ENCODE measurements at regions of chr14 and their contacts with region 1.

Region 1: GRCh38 chr14:91060351-91061055 is at the start of gene RPS6KA5:
- DNase-seq: peak; percentile 100
- ATAC-seq: peak; percentile 95
- H3K4me3 ChIP-seq: peak within 1 kb of the TSS; percentile 68
- H3K27ac ChIP-seq: peak within 1 kb of the TSS; percentile 2; the same call in 1 of the 2 replicates
- H3K4me1 ChIP-seq: no peaks in the 10 kb centered on the region
- H3K27me3 ChIP-seq: no peaks in the 10 kb centered on the region
- CTCF ChIP-seq: no peak
- POLR2A ChIP-seq: peak; percentile 62; the same call in 1 of the 2 replicates
- RAD21 ChIP-seq: no peak
- total RNA-seq, gene RPS6KA5: 0.28 and 0.36 TPM in 2 replicates

Region 2: DNA sequence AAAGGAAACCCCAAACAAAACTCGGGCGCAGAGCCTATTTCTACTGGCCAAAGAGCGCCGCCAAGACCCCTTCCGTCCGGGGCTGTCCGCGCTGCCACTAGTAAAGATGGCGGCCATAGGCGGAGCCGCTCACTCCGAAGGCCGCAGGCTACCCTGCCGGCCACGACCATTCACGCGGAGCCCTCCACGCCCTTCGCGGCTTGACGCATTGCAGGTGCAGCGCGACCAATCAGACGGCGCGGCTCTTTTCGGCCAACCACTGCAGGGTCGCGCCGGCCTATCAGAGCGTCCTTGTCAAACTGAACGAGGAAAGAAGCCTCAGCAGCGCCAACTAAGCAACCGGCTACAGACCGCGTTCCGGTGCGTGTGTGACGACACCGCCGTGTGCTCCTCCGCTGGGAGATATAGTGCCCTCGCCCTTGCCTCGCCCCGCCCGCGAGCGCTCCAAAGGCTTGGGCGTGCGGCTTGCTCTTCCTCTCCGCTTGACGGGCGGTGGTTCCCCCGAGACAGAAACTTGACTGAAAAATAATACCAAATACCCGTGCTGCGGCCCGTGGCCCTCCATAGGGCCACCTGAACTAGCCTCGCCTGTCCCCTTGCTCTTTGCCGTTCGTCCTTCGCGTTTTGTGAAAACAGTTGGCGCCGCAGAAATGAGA is 677.3 kb before region 1 on chr14:
- CTCF ChIA-PET with region 1: no interaction called
- POLR2A ChIA-PET with region 1: no interaction called
- dilution Hi-C with region 1: no loop called
- in situ Hi-C with region 1: no loop called
- intact Hi-C with region 1: loop called (anchors 2 kb)
- DNase-seq: peak; percentile 100
- ATAC-seq: peak; percentile 95
- H3K4me3 ChIP-seq: peak overlapping the region; percentile 68
- H3K27ac ChIP-seq: peak overlapping the region; percentile 92
- H3K4me1 ChIP-seq: peaks cover 13% of the 10 kb centered on the region
- H3K27me3 ChIP-seq: no peaks in the 10 kb centered on the region
- CTCF ChIP-seq: 0 out of 2 replicates have a peak, but pooled peaks have one; percentile 4
- POLR2A ChIP-seq: peak; percentile 93
- RAD21 ChIP-seq: no peak; the same call in 1 of the 2 replicates

Region 3: GRCh38 chr14:90903101-90903500 is 157.4 kb before region 1 on chr14:
- CTCF ChIA-PET with region 1: no interaction called
- POLR2A ChIA-PET with region 1: no interaction called
- dilution Hi-C with region 1: no loop called
- in situ Hi-C with region 1: no loop called
- intact Hi-C with region 1: loop called (anchors 5 kb)
- DNase-seq: peak; percentile 53
- ATAC-seq: peak; percentile 94
- H3K4me3 ChIP-seq: no peak overlapping the region
- H3K27ac ChIP-seq: no peak overlapping the region
- H3K4me1 ChIP-seq: no peaks in the 10 kb centered on the region
- H3K27me3 ChIP-seq: no peaks in the 10 kb centered on the region
- CTCF ChIP-seq: peak; percentile 78
- POLR2A ChIP-seq: no peak
- RAD21 ChIP-seq: peak; percentile 75

Region 4: DNA sequence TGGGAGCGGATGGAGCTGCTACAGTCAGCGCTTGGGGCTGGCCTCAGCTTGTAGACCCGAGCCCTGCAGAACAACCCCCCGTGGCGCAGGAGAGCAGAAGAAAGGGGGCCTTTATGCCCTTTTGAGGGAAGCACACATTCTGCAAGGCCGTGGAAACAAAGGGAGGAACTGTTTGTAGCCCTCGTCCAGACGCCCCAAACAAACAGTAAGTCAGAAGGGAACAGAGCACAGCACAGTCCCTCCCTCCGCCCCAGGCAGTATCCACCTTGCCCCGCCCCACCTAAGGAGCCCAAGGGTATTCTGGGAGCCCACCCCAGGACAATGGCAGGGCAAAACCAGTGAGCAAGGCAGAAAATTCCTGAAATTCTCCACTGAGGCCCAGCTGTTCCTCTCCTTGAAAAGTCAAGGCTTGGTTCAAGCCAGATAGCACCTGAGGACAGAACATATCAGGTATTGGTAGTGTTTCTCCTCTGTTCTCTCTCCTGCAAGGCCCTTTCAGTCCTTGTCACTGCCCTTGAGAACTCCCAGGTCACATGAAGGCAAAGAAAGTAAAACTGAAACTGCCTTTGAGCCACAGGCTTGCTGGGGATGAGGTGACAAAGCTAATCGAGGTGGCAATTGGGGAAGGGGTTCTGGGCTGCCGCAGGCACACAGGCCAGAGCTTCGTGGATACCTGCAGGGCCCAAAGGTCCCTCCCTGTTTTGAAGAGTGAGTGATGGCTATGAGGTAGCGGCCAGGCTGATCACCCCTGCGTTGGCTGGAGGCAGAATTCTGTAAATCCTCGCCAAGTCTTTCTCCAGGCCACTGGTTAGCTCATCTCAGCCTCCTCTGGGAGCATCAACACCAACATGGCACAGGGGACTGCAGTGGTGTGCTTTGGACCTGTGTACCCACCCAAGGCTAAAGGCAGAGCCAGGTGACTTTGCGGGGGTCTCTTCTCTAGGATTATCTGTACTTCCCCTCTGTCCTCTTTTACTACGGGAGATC is 53.9 kb after region 1 on chr14:
- CTCF ChIA-PET with region 1: no interaction called
- POLR2A ChIA-PET with region 1: no interaction called
- dilution Hi-C with region 1: no loop called
- in situ Hi-C with region 1: no loop called
- intact Hi-C with region 1: loop called (anchors 2 kb)
- DNase-seq: peak; percentile 43
- ATAC-seq: peak; percentile 62
- H3K4me3 ChIP-seq: peak overlapping the region; percentile 68
- H3K27ac ChIP-seq: peak overlapping the region; percentile 74
- H3K4me1 ChIP-seq: peaks cover 14% of the 10 kb centered on the region; the same call in 1 of the 2 replicates
- H3K27me3 ChIP-seq: no peaks in the 10 kb centered on the region
- CTCF ChIP-seq: no peak
- POLR2A ChIP-seq: no peak
- RAD21 ChIP-seq: no peak

Region 5: DNA sequence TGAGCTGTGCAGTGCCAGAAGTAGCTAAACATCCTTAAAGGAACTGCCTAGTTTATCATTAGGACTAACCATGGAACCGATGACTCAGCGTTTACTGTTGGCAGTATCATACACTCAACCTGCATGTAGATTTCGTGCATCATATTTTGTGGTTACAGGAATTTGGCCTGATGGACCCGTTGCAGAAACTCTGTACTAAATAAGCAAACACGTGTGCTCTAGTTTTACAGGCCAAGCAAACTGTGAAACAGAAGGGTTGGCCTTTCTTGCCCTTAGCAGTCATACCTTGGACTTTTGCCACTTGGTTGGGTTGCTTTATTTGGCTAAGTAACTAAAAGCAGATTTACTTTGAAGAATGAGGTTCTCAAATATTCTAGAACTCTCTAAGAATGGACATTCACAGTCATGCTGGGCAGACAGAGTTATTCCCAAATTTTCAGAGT is 89.0 kb after region 1 on chr14:
- CTCF ChIA-PET with region 1: no interaction called
- POLR2A ChIA-PET with region 1: no interaction called
- dilution Hi-C with region 1: no loop called
- in situ Hi-C with region 1: no loop called
- intact Hi-C with region 1: loop called (anchors 2 kb)
- DNase-seq: peak; percentile 100
- ATAC-seq: peak; percentile 93
- H3K4me3 ChIP-seq: no peak overlapping the region
- H3K27ac ChIP-seq: peak overlapping the region; percentile 76; the same call in 1 of the 2 replicates
- H3K4me1 ChIP-seq: peaks cover 8% of the 10 kb centered on the region
- H3K27me3 ChIP-seq: peaks cover 20% of the 10 kb centered on the region
- CTCF ChIP-seq: no peak
- POLR2A ChIP-seq: no peak
- RAD21 ChIP-seq: no peak

Region 6: GRCh38 chr14:91159906-91160305 is 99.4 kb after region 1 on chr14:
- CTCF ChIA-PET with region 1: no interaction called
- POLR2A ChIA-PET with region 1: no interaction called
- dilution Hi-C with region 1: no loop called
- in situ Hi-C with region 1: no loop called
- intact Hi-C with region 1: no loop called
- DNase-seq: no peak
- ATAC-seq: no peak
- H3K4me3 ChIP-seq: no peak overlapping the region
- H3K27ac ChIP-seq: no peak overlapping the region
- H3K4me1 ChIP-seq: peaks cover 8% of the 10 kb centered on the region
- H3K27me3 ChIP-seq: peaks cover 4% of the 10 kb centered on the region; the same call in 1 of the 2 replicates
- CTCF ChIP-seq: no peak
- POLR2A ChIP-seq: no peak
- RAD21 ChIP-seq: no peak

Region 7: GRCh38 chr14:91286530-91286937 is 226.0 kb after region 1 on chr14:
- CTCF ChIA-PET with region 1: no interaction called
- POLR2A ChIA-PET with region 1: no interaction called
- dilution Hi-C with region 1: no loop called
- in situ Hi-C with region 1: no loop called
- intact Hi-C with region 1: loop called (anchors 5 kb)
- DNase-seq: peak; percentile 62
- ATAC-seq: peak; percentile 82
- H3K4me3 ChIP-seq: no peak overlapping the region
- H3K27ac ChIP-seq: no peak overlapping the region
- H3K4me1 ChIP-seq: peaks cover 2% of the 10 kb centered on the region; the same call in 1 of the 2 replicates
- H3K27me3 ChIP-seq: no peaks in the 10 kb centered on the region; the same call in 1 of the 2 replicates
- CTCF ChIP-seq: peak; percentile 93
- POLR2A ChIP-seq: no peak
- RAD21 ChIP-seq: peak; percentile 84

Measured in IMR-90 (cell line).